Breast epithelium (tissue), 4 donors: ENCODE measurements at regions of chr5 and their contacts with region 1.

Region 1: DNA sequence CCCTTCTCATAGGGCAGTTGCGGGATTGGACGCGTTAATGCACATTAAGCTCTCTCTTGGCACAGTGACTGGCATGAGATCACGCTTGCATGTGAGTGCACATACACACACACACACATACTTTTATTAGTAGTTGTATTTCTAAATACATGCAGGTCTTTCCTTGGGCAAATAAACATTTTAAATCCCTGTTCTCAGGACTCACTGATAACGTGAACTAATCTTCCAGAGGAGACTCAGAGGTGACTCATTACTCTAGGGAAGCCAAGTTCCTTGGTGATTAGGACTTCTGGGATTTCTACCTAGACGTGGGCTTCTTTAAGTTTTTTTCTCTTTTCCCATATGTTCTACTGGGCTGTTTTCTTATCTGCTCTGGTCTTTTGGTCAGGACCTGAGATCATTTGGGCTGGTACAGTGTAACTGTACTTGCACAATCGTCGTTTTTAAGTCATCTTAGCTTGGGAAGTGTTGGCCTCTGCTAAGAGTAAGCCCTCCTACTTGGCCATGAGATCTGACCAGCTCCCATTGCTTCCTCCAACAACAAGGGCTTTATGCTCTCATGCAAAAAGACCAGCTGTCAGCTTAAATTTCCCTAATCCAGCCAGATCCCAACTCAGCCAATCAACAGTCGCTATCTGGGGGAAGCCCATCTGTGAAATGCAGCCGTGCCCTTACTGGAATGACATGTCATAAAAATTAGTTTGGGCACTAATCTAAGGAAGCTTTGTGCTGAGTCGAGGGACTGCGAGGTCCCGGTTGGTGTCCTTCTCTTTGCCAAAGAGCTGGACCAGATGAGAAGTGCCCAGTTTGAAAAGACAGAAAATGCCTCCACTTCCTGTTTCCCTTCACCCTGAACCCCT is 176.4 kb upstream of the ANKRD55 start:
- DNase-seq: no peak
- H3K4me3 ChIP-seq: no peak overlapping the region
- H3K27ac ChIP-seq: no peak overlapping the region
- H3K4me1 ChIP-seq: no peaks in the 10 kb centered on the region
- H3K27me3 ChIP-seq: no peaks in the 10 kb centered on the region
- CTCF ChIP-seq: no peak
- POLR2A ChIP-seq: no peak

Region 2: DNA sequence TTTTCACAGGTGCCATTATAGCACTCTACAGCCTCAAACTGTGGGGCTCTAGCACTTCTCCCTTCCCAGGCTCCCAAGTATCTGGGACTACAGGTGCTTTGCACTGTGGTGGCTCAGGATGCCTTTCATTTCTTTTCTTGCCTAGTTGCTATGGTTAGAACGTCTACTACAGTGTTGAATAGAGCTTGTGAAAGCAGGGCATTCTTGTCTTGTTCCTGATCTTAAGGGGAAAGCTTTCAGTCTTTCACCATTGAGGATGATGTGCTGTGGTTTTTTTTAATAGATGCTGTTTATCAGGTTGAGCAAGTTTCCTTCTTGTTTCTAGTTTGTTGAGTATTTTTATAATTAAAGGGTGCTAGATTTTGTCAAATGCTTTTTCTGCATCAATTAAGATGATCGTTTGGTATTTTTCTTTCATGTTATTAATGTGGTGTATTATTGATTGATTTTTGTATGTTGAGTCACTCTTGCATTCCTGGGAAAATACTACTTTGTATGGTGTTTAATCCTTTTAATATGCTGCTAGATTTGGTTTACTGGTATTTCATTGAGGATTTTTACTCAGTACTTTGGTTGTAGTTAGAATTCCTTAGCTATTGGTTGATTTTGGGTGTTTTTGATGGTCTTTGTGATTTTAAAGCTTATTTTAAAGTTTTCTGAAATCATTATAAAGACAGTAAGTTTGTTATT is 799.9 kb after region 1 on chr5:
- intact Hi-C with region 1: loop called (anchors 5 kb)
- DNase-seq: no peak
- H3K4me3 ChIP-seq: no peak overlapping the region
- H3K27ac ChIP-seq: no peak overlapping the region
- H3K4me1 ChIP-seq: no peaks in the 10 kb centered on the region
- H3K27me3 ChIP-seq: no peaks in the 10 kb centered on the region
- CTCF ChIP-seq: no peak
- POLR2A ChIP-seq: no peak

Region 3: DNA sequence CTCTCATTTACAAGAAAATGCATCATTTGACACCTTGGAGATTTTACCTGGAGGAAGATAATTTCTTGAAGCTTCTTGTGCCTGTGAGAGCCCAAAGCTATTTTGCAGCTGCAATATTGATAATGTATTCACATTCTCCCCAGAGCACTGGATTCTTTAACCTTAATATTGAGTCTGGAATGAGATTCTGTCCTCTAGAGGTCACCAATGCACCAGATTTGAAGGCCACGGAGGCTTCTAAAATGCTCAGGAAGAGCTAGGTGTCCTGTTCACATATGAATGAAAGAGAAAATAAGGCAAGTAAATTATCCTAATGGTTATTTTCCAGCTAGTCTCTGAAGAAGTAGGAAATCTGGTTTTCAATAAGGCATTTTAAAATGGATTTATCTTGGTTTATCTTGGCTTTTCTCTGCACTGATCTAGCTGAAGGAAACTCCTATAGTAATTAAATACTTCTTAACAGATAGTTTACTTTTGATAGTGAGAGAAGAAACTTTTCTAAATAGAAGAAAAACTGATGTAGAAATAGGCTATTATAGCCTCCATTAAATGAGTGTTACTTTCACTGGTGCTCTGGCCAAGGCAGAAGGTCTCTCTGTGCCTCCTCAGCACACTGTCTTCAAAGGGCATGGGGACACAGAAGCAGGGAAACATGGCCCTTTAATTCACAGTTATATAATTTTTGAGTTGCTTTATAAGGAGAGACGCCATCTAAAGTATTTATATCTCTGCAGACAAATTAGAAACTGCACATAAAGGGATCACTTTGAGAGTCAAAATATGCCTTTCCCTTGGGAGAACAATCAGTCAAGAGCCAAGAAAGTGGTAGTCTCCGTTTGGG is 1370.0 kb after region 1 on chr5:
- intact Hi-C with region 1: no loop called
- DNase-seq: peak in 1 of 2 donors; percentile 29
- H3K4me3 ChIP-seq: no peak overlapping the region
- H3K27ac ChIP-seq: no peak overlapping the region
- H3K4me1 ChIP-seq: no peaks in the 10 kb centered on the region
- H3K27me3 ChIP-seq: no peaks in the 10 kb centered on the region
- CTCF ChIP-seq: peak in 2 of 3 donors; percentile 68 to 70
- POLR2A ChIP-seq: no peak